Activated CD4-positive, alpha-beta memory T cell treated with anti-CD3 and anti-CD28 coated beads, Interleukin-2, amount 10 ng/mL, durations not matched to agents 7 days and 5 days (primary cell): ENCODE measurements at regions of chr19 and their contacts with region 1.

Region 1: GRCh38 chr19:43668406-43669158 is 1.4 kb downstream of the PLAUR start:
- DNase-seq: peak; percentile 99
- H3K4me3 Mint-ChIP-seq: peak overlapping the region; percentile 79
- H3K27ac Mint-ChIP-seq: peak overlapping the region; percentile 55
- H3K4me1 Mint-ChIP-seq: peaks cover 49% of the 10 kb centered on the region
- H3K27me3 Mint-ChIP-seq: peaks cover 10% of the 10 kb centered on the region

Region 2: DNA sequence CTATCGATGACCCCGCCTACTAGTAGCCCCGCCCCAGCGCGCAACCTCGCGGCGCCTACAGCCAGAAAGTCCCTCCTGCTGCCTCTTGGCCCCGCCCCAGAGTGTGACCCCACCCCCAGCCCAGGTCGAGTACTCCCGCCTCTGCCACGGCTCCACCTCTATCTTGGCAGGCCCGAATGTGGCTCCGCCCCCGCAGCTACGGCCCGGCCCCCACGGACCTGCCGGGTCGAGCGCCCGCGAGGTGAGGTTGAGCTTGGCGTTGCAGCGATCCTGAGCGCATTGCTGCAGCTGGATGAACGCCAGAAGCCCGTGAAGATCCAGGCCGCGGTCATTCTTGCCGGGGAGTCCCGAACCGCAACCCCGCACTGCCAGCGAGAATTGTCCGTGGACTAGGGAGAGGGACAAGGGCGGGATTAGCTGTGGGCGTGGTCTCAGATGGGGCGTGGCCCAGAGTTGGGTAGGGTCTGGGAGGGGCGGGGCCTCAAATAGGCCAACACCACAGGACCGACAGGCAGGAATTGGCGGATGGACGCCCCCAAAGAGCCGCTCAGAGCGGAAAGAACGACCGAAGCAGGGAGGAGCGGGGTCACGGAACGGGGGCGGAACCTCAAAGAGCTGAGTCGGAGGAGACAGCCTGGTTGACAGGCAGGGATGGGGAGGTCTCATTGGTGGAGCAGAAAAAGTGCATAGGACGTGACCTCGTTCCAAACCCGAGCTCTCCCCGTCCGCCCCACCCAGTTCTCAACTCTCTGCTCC is 205.0 kb before region 1 on chr19:
- CTCF ChIA-PET with region 1: interaction called, 10 read pairs
- POLR2A ChIA-PET with region 1: interaction called, 3 read pairs
- DNase-seq: peak; percentile 99
- H3K4me3 Mint-ChIP-seq: peak overlapping the region; percentile 88
- H3K27ac Mint-ChIP-seq: peak overlapping the region; percentile 93
- H3K4me1 Mint-ChIP-seq: peaks cover 34% of the 10 kb centered on the region
- H3K27me3 Mint-ChIP-seq: peaks cover 12% of the 10 kb centered on the region

Region 3: DNA sequence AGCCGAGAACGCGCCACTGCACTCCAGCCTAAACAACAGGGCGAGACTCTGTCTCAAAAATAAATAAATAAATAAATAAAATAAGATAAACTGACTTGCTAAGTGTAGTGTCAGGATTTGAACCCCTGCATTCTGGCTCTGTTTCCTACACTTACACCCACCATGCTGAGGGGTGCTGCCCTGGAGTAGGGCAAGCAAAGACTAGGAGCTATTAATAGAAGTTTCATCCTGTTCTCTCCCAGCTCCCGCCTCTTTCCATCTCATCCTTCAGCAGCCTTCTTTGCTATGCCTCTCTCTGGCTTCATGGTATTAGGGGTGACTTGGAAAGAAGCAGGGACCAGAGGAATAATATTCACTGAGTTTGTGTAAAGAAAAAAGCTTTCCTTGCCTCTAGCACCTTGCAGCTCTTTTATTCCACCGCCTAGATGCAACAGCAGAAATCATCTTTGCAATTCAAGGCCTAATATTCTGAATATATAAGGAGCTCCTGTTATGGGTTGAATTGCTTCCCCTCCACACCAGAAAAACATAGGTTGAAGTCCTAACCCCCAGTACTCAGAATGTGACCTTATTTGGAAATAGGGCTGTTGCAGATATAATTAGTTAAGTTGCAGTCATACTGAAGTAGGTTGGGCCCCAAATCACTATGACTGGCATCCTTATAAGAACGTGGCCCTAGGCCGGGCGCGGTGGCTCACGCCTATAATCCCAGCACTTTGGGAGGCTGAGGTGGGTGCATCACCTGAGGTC is 10.1 kb after region 1 on chr19:
- CTCF ChIA-PET with region 1: interaction called, 16 read pairs
- POLR2A ChIA-PET with region 1: no interaction called
- DNase-seq: no peak
- H3K4me3 Mint-ChIP-seq: no peak overlapping the region
- H3K27ac Mint-ChIP-seq: no peak overlapping the region
- H3K4me1 Mint-ChIP-seq: peaks cover 19% of the 10 kb centered on the region
- H3K27me3 Mint-ChIP-seq: no peaks in the 10 kb centered on the region

Region 4: GRCh38 chr19:43754503-43755255 is 86.1 kb after region 1 on chr19 and contains the start of gene SMG9:
- CTCF ChIA-PET with region 1: interaction called, 30 read pairs
- POLR2A ChIA-PET with region 1: interaction called, 27 read pairs
- DNase-seq: peak; percentile 98
- H3K4me3 Mint-ChIP-seq: peak within 1 kb of the TSS; percentile 97
- H3K27ac Mint-ChIP-seq: peak within 1 kb of the TSS; percentile 99
- H3K4me1 Mint-ChIP-seq: peaks cover 67% of the 10 kb centered on the region
- H3K27me3 Mint-ChIP-seq: no peaks in the 10 kb centered on the region
- total RNA-seq, gene SMG9: 58.1 to 64.6 TPM

Region 5: DNA sequence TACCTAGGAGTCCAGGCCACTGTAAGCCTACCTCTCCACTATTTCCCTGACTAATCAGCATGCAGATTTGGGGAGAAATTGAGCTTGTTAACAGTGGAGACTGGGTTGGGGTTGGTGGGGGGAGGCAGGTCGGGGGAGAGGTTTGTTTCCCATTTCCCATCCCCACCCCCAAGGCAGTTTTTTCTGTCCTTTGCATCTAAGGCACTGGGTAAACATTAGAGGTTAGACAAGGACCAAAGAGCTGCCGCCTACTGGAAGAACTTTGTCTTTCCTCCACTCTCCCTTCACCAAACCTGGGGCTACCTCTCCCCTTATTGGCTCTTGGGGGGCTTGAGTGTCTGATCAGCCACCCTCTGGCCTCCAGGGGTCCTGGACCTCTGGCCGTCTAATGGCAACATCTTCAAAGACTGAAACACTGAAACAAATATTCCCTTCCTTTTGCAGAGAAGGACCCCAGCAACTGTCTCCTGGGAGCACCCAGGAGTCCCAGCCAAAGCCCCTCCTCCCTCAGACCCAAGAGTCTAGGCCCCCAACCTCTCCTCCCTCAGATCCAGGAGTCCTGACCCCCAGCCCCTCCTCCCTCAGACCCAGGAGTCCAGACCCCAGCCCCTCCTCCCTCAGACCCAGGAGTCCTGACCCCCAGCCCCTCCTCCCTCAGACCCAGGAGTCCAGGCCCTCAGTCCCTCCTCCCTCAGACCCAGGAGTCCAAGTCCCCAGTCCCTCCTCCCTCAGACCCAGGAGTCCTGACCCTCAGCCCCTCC is 111.4 kb after region 1 on chr19:
- CTCF ChIA-PET with region 1: interaction called, 11 read pairs
- POLR2A ChIA-PET with region 1: interaction called, 18 read pairs
- DNase-seq: no peak
- H3K4me3 Mint-ChIP-seq: peak overlapping the region; percentile 72
- H3K27ac Mint-ChIP-seq: peak overlapping the region; percentile 92
- H3K4me1 Mint-ChIP-seq: peaks cover 86% of the 10 kb centered on the region
- H3K27me3 Mint-ChIP-seq: no peaks in the 10 kb centered on the region

Region 6: DNA sequence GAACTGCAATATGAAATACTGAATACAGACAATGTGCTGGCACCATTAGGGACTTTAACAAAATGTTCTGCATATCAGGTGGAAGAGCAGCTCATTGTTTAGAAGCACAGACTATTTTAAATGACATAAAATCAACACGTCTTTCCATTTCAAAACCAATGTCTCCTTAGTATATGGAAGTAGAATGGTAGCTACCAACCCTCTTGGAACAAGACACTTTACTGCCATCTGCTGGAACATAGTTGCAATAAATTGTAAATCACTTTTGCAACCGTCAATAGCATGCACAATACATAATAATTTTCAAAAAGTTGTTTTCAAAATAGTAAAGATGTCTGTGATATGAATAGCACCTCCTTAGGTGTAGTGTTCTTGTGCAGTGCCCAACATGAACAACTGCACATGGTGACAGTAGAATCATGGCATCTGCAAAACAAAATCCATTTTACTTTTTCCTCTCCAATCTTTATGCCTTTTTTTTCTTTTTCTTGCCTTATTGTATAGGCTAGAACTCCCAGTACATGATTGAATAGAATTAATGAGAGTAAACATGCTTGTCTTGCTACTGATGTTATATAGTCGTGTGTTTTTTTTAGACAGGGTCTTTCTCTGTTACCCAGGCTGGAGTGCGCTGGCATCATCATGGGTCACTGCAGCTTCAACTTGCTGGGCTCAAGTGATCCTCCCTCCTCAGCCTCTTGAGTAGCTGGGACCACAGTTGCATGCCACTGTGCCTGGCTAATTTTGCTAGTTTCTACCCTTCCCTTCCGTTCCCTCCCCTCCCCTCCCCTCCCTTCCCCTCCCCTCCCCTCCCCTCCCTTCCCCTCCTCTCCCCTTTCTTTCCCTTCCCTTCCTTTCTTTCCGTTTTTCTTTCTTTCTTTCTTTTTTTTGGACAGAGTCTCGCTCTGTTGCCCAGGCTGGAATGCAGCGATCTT is 141.4 kb after region 1 on chr19:
- CTCF ChIA-PET with region 1: interaction called, 14 read pairs
- POLR2A ChIA-PET with region 1: no interaction called
- DNase-seq: no peak
- H3K4me3 Mint-ChIP-seq: no peak overlapping the region
- H3K27ac Mint-ChIP-seq: no peak overlapping the region
- H3K4me1 Mint-ChIP-seq: peaks cover 10% of the 10 kb centered on the region
- H3K27me3 Mint-ChIP-seq: peaks cover 8% of the 10 kb centered on the region